ENCODE measurements at regions of chr13 and their contacts with region 1.

Region 1: DNA sequence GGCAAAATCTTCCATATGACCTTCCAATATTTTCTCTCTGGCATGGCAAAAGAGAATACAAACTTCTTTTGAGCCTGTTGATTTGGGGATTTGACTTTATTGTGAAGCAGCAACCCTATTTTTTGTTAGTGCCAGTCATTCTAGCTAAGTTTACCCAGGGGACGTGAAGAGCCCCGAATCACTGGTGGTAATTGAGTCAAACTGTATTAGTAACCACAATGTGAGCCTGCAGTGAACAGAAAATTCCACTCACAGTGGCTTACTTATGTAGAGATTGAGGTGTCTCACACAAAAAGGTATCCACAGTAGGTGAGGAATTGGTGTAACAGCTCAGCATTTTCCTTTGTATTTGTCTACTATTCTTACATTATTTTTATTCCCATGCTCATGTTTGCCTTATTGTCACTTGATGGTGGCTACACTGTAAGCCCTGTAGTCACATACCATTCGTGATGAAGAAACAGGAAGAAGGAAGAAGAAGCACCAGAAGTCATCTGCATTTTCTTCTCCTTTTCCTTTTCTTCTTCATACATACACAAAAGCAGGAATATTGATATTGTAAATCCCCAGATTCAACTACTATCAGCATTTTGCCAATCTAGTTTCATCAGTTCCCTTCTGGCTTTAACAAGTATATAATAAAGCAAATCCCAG is 33.3 kb upstream of the MYCBP2 start:
- DNase-seq: no peak
- H3K4me3 ChIP-seq: no peak overlapping the region
- H3K27ac ChIP-seq: no peak overlapping the region
- H3K4me1 ChIP-seq: no peaks in the 10 kb centered on the region
- H3K27me3 ChIP-seq: no peaks in the 10 kb centered on the region
- CTCF ChIP-seq: no peak

Region 2: GRCh38 chr13:77285098-77285497 is 75.1 kb before region 1 on chr13:
- CTCF ChIA-PET with region 1: no interaction called
- dilution Hi-C with region 1: loop called (anchors 5 kb)
- in situ Hi-C with region 1: no loop called
- intact Hi-C with region 1: no loop called
- DNase-seq: no peak
- H3K4me3 ChIP-seq: no peak overlapping the region
- H3K27ac ChIP-seq: no peak overlapping the region
- H3K4me1 ChIP-seq: no peaks in the 10 kb centered on the region
- H3K27me3 ChIP-seq: no peaks in the 10 kb centered on the region
- CTCF ChIP-seq: no peak